AG04450 (cell line): ENCODE measurements at regions of chr6 and their contacts with region 1.

Region 1: DNA sequence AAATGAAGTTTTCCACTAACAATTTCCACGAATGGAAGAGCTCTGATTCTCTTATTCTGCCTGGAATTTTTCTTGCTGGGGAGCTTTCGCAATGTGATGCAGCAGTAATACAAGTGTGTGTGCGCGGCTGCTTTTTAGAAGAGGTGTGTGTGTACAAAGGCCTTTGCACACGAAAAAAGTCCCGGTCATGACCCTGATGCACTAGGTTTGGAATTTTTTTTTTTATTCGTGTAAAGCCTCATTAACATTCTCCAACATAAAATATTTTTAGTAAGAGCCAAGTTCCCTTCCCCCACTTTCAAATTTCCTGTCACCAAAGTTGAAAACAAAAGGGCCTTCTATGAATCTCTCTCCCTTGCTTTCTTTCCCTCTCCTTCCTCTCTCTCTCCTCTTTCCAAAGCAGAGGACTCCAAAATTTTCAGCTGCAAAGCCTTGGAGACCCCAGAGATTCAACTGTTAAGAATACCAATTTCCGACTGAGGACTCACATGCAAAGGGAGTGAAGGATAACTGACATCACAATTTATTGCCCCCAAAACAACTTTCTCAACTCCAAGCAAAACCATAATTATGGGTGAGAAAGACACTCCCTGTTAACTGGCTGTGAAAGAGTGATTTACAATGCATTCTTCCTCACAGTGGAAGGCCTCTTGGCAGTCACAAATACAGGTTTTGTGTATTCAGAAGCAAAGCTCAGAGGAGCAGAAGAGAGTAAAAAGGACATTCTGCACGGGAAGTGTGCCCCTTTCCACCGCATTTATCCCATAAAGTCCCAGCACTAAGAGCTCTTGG is 421.2 kb upstream of the JARID2 start:
- DNase-seq: no peak
- H3K4me3 ChIP-seq: no peak overlapping the region
- H3K27ac ChIP-seq: no peak overlapping the region
- H3K27me3 ChIP-seq: no peaks in the 10 kb centered on the region
- CTCF ChIP-seq: no peak

Region 2: GRCh38 chr6:14682812-14683211 is 141.9 kb before region 1 on chr6:
- CTCF ChIA-PET with region 1: no interaction called
- POLR2A ChIA-PET with region 1: interaction called, 10 read pairs
- DNase-seq: no peak
- H3K4me3 ChIP-seq: no peak overlapping the region
- H3K27ac ChIP-seq: no peak overlapping the region
- H3K27me3 ChIP-seq: no peaks in the 10 kb centered on the region
- CTCF ChIP-seq: no peak